Left cardiac atrium (tissue), 4 donors: ENCODE measurements at regions of chr5 and their contacts with region 1.

Region 1: GRCh38 chr5:107248066-107248695 is 422.6 kb downstream of the EFNA5 start:
- DNase-seq: peak; percentile 41
- ATAC-seq: peak in 1 of 2 donors; percentile 49

Region 2: DNA sequence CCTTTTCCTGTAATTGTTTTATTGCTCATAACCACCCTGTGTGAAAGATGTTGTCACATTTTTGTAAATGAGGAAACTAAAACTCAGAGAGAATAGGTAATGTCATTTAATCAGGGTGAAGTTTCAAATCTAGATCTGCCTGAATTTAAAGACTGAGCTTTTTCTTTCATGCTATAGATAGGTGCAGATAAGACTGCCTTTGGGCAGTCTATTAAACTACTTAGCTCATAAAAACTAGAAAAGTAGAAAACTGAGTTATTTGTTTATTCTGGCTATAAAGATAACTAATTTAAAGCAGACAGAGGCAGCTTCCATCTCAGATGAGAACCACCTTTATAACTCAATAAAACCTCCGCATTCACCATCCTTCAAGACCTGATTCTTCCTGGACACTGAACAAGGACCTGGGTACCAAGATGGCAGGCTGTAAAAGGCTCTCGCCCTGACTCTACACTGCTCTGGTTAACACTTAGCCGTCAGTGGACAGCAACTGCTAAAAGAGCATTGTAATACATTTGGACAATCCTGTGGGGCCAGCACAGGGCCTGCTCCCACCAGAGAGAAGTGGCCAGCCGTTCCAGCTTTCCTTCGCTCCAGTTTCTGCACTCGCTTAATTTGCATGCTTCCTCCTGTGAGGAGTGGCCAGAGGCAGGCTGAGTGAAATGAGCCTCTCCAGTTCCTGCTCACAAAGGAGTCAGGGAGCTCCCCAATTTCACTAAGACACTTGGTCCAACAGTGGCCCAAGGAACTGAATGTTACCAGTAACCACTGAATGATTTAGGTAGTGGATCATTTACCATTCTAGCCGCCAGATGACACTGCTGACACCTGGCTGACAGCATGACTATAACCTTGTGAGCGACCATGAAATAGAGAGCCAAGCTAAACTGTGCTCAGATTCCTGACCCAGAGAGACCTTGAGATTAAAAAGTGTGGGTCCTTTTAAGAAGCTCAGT is 143.9 kb before region 1 on chr5:
- intact Hi-C with region 1: loop called in 1 of 2 experiments (anchors 10 kb)
- DNase-seq: no peak
- ATAC-seq: peak; percentile 87 to 93

Region 3: GRCh38 chr5:107289030-107289714 is 41.0 kb after region 1 on chr5:
- intact Hi-C with region 1: no loop called
- DNase-seq: no peak
- ATAC-seq: no peak